ENCODE measurements at regions of chr14 and their contacts with region 1.

Region 1: DNA sequence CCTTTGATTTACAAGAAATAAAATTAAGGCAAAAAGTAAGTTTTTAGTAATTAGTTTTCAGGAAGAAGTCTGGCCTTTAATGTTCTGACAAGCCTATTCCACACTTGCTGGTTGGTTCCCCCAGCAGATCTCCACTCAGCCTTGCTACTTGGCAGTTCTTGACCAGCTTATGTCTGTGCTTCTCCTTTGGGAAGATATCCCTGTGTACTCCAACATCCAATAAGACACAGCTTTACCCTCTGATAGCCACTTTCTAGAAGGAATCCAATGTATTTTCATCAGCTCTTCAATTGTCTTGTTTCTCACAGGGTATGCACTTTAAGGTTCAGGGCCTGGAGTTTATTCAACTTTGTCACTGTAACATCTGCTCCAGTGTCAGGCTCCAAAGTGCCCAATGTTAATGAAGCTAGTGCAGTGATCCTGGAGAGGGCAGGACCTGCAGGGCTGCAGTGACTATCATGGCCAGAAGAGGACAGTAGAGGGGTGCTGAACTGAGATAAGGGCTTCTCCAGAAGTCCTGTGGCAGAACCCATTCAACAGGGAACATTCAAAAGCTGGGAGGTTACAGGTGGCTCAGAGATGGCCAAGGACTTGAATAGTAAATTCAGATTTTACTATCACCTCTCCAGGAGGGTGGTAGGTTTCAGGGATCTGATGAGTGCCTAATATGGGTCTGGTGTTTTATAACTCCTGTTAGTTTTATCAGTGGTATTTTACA is 22.9 kb downstream of the JKAMP start:
- H3K4me3 ChIP-seq: no peak overlapping the region
- H3K27ac ChIP-seq: no peak overlapping the region
- H3K4me1 ChIP-seq: no peaks in the 10 kb centered on the region; the same call in 1 of the 2 replicates
- CTCF ChIP-seq: 0 out of 2 replicates have a peak, but pooled peaks have one; percentile 50

Region 2: DNA sequence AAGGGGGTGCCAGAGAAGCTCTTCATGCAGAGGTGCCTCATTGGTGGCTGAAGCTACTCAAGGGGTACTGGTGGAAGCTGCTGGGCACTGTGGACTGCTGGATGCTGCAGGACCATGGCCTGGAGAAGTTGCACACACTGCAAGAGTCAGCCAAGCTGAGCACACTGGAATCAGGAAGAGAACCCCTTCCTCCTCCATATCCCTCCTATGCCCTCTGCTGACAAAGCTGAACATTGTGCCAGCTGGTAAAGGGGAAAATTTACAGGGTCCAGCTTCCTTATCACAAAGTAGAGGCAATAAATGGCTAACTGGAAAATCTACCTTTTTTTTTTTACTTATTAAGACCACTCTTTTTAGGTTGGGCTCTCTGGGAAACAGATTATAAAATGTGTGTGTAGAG is 62.9 kb after region 1 on chr14:
- CTCF ChIA-PET with region 1: interaction called, 208 read pairs
- POLR2A ChIA-PET with region 1: no interaction called
- H3K4me3 ChIP-seq: no peak overlapping the region
- H3K27ac ChIP-seq: no peak overlapping the region
- H3K4me1 ChIP-seq: peaks cover 12% of the 10 kb centered on the region
- CTCF ChIP-seq: no peak

Measured in HEK293 (cell line).